ENCODE measurements at regions of chr2 and their contacts with region 1.

Region 1: GRCh38 chr2:55992465-55992864 is 68.9 kb upstream of the EFEMP1 start:
- DNase-seq: peak; percentile 100
- H3K4me3 ChIP-seq: no peak overlapping the region
- H3K27ac ChIP-seq: peak overlapping the region; percentile 97
- H3K4me1 ChIP-seq: peaks cover 62% of the 10 kb centered on the region
- H3K27me3 ChIP-seq: no peaks in the 10 kb centered on the region
- CTCF ChIP-seq: no peak
- POLR2A ChIP-seq: peak; percentile 70

Region 2: GRCh38 chr2:55617175-55618024 is 375.1 kb before region 1 on chr2 and contains the start of gene PPP4R3B:
- CTCF ChIA-PET with region 1: no interaction called
- POLR2A ChIA-PET with region 1: no interaction called
- dilution Hi-C with region 1: no loop called
- intact Hi-C with region 1: loop called (anchors 1 kb)
- DNase-seq: peak; percentile 100
- H3K4me3 ChIP-seq: peak within 1 kb of the TSS; percentile 64 to 98 (median 97)
- H3K27ac ChIP-seq: peak within 1 kb of the TSS; percentile 87
- H3K4me1 ChIP-seq: peaks cover 24% of the 10 kb centered on the region
- H3K27me3 ChIP-seq: no peaks in the 10 kb centered on the region
- CTCF ChIP-seq: peak; percentile 26 to 52
- POLR2A ChIP-seq: peak; percentile 59
- total RNA-seq, gene PPP4R3B: 49.0 and 51.5 TPM in 2 replicates

Region 3: DNA sequence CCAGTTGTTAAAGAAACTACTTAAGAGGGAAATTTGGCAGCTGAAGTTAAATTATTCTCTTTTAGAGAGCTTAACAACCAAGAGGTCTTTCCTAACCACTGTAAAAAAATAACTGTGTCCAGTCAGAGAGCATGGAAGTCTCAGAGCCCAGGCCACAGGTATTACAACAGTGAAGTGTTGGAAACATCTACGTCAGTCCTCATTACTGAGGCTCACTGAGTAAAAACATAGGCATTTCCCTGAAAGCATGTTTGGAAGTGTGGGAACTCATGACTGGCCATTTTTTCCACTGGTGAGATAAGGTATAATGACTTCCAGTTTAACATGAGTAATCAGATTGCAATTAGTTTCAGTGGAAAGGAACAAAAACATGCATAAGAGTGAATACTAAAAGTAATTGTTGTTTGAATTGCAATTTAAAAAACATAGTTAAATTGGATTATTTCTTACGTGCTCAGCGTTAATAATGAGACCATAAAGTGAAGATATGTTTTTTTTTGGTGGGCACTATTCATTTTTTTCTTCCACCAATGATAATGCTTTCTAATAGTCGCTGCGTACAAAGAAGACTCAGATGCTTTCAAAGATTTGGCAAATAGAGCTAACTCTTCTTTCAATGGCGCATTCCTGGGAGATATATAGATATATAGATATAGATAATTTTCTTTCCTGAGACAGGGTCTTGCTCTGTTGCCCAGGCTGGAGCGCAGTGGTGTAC is 129.6 kb before region 1 on chr2:
- CTCF ChIA-PET with region 1: no interaction called
- POLR2A ChIA-PET with region 1: interaction called, 3 read pairs
- dilution Hi-C with region 1: no loop called
- intact Hi-C with region 1: loop called (anchors 1 kb)
- DNase-seq: peak; percentile 98
- H3K4me3 ChIP-seq: no peak overlapping the region
- H3K27ac ChIP-seq: peak overlapping the region; percentile 92
- H3K4me1 ChIP-seq: peaks cover 54% of the 10 kb centered on the region
- H3K27me3 ChIP-seq: no peaks in the 10 kb centered on the region
- CTCF ChIP-seq: no peak
- POLR2A ChIP-seq: peak; percentile 80

Region 4: GRCh38 chr2:55923091-55923981 is 69.1 kb before region 1 on chr2 and contains the start of gene EFEMP1:
- CTCF ChIA-PET with region 1: interaction called, 4 read pairs
- POLR2A ChIA-PET with region 1: interaction called, 18 read pairs
- dilution Hi-C with region 1: no loop called
- intact Hi-C with region 1: loop called (anchors 1 kb)
- DNase-seq: peak; percentile 87
- H3K4me3 ChIP-seq: peak within 1 kb of the TSS; percentile 57 to 97 (median 91)
- H3K27ac ChIP-seq: peak within 1 kb of the TSS; percentile 82
- H3K4me1 ChIP-seq: peaks cover 43% of the 10 kb centered on the region
- H3K27me3 ChIP-seq: no peaks in the 10 kb centered on the region
- CTCF ChIP-seq: peak in 1 of 2 donors; percentile 4
- POLR2A ChIP-seq: peak; percentile 96
- total RNA-seq, gene EFEMP1: 2,354 and 2,981 TPM in 2 replicates

Region 5: DNA sequence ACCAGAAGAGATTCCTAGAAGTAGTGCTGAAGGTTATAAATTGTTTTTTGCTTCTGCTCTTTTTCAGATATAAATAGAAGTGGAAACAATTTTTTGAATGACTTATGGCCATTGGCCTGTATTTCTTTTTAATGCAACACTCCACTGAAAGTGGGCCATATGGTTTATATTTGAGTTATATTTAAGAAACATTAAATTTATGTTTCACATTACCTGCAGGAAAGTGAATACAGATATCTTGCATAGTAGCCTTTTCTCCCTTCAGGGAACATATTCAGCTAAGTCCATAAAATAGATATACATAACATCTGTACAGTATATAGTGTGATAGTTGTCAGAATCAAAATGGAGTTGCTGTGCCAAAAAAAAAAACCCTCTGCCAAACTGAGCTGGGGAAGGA is 15.8 kb before region 1 on chr2:
- CTCF ChIA-PET with region 1: interaction called, 12 read pairs
- POLR2A ChIA-PET with region 1: no interaction called
- dilution Hi-C with region 1: no loop called
- intact Hi-C with region 1: no loop called
- DNase-seq: no peak
- H3K4me3 ChIP-seq: no peak overlapping the region
- H3K27ac ChIP-seq: no peak overlapping the region
- H3K4me1 ChIP-seq: peaks cover 3% of the 10 kb centered on the region
- H3K27me3 ChIP-seq: no peaks in the 10 kb centered on the region
- CTCF ChIP-seq: no peak
- POLR2A ChIP-seq: no peak

Measured in endothelial cell of umbilical vein (primary cell).